Pancreas (tissue), 10 donors: ENCODE measurements at regions of chr11 and their contacts with region 1.

Region 1: GRCh38 chr11:95150946-95151684 is 61.5 kb downstream of the ENDOD1 start:
- DNase-seq: peak; percentile 85 to 93 (median 90)
- ATAC-seq: peak; percentile 83 to 93 (median 88)
- H3K4me3 ChIP-seq: peak overlapping the region; percentile 33 to 59 (median 45)
- H3K27ac ChIP-seq: peak overlapping the region; percentile 84 to 93 (median 85)
- H3K4me1 ChIP-seq: peaks cover 0 to 4% (median 3%) of the 10 kb centered on the region in 3 donors
- H3K27me3 ChIP-seq: no peaks in the 10 kb centered on the region
- CTCF ChIP-seq: peak; percentile 56 to 65 (median 59)

Region 2: DNA sequence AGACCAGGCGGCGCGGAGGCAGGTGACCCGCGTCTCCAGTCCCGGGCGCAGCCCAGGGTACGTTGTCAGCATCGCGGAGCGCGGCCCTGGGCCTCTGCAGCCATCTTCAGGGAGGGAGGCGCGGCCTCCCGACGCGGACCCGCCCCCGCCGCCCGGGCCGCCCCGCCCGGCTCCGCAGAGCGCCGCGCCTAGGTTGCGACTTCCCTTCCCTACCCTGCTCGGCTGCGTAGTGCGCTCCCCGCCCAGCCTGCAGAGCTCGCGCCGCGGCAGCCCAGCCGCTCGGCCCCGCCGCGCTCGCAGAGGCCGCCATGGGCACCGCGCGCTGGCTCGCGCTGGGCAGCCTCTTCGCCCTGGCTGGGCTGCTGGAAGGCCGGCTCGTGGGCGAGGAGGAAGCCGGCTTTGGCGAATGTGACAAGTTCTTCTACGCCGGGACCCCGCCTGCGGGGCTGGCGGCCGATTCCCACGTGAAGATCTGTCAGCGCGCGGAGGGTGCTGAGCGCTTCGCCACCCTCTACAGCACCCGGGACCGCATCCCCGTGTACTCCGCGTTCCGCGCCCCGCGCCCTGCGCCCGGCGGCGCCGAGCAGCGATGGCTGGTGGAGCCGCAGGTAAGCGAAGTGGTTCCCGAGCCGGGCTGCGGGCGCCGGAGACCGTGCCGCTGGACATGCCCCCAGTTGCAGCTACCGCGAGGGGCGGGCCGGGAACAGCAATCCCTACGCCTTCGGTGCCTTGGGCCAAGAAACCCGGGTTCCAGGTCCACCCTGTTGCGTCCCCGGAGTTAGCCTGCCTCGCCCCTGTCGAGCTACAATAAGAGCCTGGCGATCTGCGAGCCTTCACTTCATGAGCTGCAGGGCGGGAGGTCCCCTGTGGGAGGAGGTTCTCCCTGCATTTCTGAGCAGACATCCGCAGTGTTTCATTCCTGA is 61.2 kb before region 1 on chr11 and contains the start of gene ENDOD1:
- intact Hi-C with region 1: loop called in 1 of 3 experiments (anchors 10 kb)
- DNase-seq: peak; percentile 80 to 92 (median 84)
- ATAC-seq: peak; percentile 95 to 98 (median 97)
- H3K4me3 ChIP-seq: peak within 1 kb of the TSS; percentile 70 to 86 (median 84)
- H3K27ac ChIP-seq: peak within 1 kb of the TSS; percentile 77 to 92 (median 88)
- H3K4me1 ChIP-seq: peaks cover 0 to 9% (median 0%) of the 10 kb centered on the region in 3 donors
- H3K27me3 ChIP-seq: no peaks in the 10 kb centered on the region
- CTCF ChIP-seq: no peak
- total RNA-seq, gene ENDOD1: 3.3 to 8.9 (median 5.1) TPM

Region 3: GRCh38 chr11:95705485-95706124 is 554.5 kb after region 1 on chr11:
- intact Hi-C with region 1: loop called in 2 of 3 experiments (anchors 5 to 10 kb)
- DNase-seq: peak; percentile 73 to 87 (median 84)
- ATAC-seq: peak; percentile 98 to 100 (median 100)
- H3K4me3 ChIP-seq: no peak overlapping the region
- H3K27ac ChIP-seq: peak overlapping the region in 1 of 4 donors; percentile 10
- H3K4me1 ChIP-seq: no peaks in the 10 kb centered on the region
- H3K27me3 ChIP-seq: no peaks in the 10 kb centered on the region
- CTCF ChIP-seq: peak; percentile 80 to 89 (median 84)

Region 4: DNA sequence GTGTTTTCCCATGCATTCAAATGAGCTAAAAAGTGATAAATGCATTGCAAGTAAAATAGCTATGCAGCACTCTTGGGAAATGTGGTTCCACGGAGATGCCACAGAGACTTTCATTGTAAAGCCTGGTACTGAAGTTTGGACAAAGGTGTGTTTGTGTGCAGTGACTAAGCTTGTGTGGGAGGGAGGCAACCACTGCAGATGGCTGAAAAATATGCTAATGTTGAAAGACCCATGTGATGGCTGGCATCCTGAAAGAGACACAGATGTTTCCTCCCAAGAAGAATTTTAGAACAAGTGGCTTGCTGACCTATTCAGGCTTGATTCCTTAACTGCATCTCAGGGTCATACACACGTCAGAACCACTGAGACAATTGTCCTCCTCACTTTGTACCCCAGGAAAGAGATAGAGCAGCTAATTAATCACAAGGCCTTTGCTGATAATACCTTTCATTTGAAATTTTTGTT is 564.7 kb after region 1 on chr11:
- intact Hi-C with region 1: loop called in 1 of 3 experiments (anchors 10 kb)
- DNase-seq: peak in 1 of 6 donors; percentile 10
- ATAC-seq: peak in 3 of 4 donors; percentile 40 to 67 (median 66)
- H3K4me3 ChIP-seq: no peak overlapping the region
- H3K27ac ChIP-seq: no peak overlapping the region
- H3K4me1 ChIP-seq: peaks cover 0 to 4% (median 0%) of the 10 kb centered on the region in 3 donors
- H3K27me3 ChIP-seq: no peaks in the 10 kb centered on the region
- CTCF ChIP-seq: no peak

Region 5: GRCh38 chr11:95764267-95764898 is 613.3 kb after region 1 on chr11:
- intact Hi-C with region 1: loop called in 2 of 3 experiments (anchors 5 kb)
- DNase-seq: no peak
- ATAC-seq: peak; percentile 66 to 89 (median 86)
- H3K4me3 ChIP-seq: no peak overlapping the region
- H3K27ac ChIP-seq: no peak overlapping the region
- H3K4me1 ChIP-seq: no peaks in the 10 kb centered on the region
- H3K27me3 ChIP-seq: no peaks in the 10 kb centered on the region
- CTCF ChIP-seq: peak; percentile 16 to 62 (median 50)